Sigmoid colon (tissue), 7 donors: ENCODE measurements at regions of chr3 and their contacts with region 1.

Region 1: GRCh38 chr3:119293871-119294695 is at the start of gene ARHGAP31:
- DNase-seq: peak; percentile 86
- H3K4me3 ChIP-seq: peak within 1 kb of the TSS; percentile 82 to 92 (median 87)
- H3K27ac ChIP-seq: peak within 1 kb of the TSS; percentile 91 to 95 (median 92)
- H3K4me1 ChIP-seq: peaks cover 0 to 32% (median 26%) of the 10 kb centered on the region in 4 donors
- H3K27me3 ChIP-seq: no peaks in the 10 kb centered on the region
- CTCF ChIP-seq: no peak
- EP300 ChIP-seq: no peak
- POLR2A ChIP-seq: peak; percentile 5 to 15
- total RNA-seq, gene ARHGAP31: 11.0 to 18.0 (median 12.0) TPM

Region 2: DNA sequence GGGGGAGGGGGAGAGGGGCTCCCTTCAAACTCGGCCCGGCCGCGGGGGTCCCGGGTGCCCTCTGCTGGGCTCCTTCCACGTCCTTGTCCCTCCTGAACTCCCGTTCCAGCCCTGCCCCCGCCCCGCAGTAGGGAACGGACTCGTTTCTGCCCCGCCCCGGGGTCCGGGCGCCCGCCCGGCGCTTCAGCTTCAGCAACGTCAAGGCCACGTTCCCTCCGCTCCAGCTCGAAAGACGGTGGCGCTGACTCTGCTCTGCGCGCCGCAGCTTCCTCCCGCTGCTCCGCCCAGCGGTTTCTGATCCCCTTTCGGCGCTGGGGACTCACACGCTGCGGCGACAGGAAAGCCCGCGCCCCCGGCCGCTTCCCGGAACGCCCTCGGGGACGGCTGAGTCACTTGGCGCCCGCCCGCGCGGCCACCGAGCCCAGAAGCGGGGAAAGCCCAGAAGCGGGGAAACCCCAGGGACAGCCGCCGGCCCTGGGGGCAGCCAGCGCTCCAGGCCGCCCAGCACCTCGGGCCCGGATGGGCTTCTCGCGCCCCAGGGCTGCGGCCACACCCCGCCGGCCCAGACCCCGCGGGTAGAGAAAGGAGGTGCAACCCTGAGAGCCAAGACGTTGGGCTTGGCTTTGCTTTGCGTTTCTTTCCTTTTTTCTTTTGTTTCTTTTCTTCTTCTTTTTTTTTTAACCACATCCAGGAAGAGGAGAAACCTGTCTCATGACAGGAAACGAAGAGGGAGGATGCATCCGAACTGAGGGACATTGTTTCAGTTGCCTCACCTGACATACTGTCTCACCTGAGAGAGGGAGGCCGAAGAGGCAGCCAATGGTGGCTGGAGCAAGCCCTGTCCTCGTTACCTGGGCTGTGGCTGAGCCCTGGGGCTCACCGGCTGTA is 29.0 kb after region 1 on chr3:
- intact Hi-C with region 1: loop called (anchors 2 kb)
- DNase-seq: peak; percentile 91
- H3K4me3 ChIP-seq: peak overlapping the region; percentile 56 to 89 (median 78)
- H3K27ac ChIP-seq: peak overlapping the region; percentile 94 to 96 (median 96)
- H3K4me1 ChIP-seq: peaks cover 0 to 24% (median 6%) of the 10 kb centered on the region in 4 donors
- H3K27me3 ChIP-seq: no peaks in the 10 kb centered on the region
- CTCF ChIP-seq: no peak
- EP300 ChIP-seq: peak in 2 of 4 donors; percentile 23 to 57
- POLR2A ChIP-seq: peak; percentile 43 to 60